HCT116 (cell line): ENCODE measurements at regions of chr12 and their contacts with region 1.

Region 1: GRCh38 chr12:40152783-40153383 is 47.0 kb upstream of the SLC2A13 start:
- DNase-seq: peak; percentile 24
- ATAC-seq: peak; percentile 53; the same call in 1 of the 2 replicates
- H3K4me3 ChIP-seq: no peak overlapping the region
- H3K27ac ChIP-seq: no peak overlapping the region
- H3K4me1 ChIP-seq: no peaks in the 10 kb centered on the region
- H3K27me3 ChIP-seq: no peaks in the 10 kb centered on the region
- CTCF ChIP-seq: peak; percentile 44 to 85 (median 68); a peak in 5 of 6 replicates
- POLR2A ChIP-seq: no peak
- RAD21 ChIP-seq: peak; percentile 60

Region 2: GRCh38 chr12:40271981-40272664 is 119.2 kb after region 1 on chr12:
- CTCF ChIA-PET with region 1: no interaction called
- POLR2A ChIA-PET with region 1: no interaction called
- RAD21 ChIA-PET with region 1: no interaction called
- intact Hi-C with region 1: no loop called
- DNase-seq: no peak
- ATAC-seq: no peak
- H3K4me3 ChIP-seq: no peak overlapping the region
- H3K27ac ChIP-seq: no peak overlapping the region
- H3K4me1 ChIP-seq: no peaks in the 10 kb centered on the region
- H3K27me3 ChIP-seq: no peaks in the 10 kb centered on the region
- CTCF ChIP-seq: no peak
- POLR2A ChIP-seq: no peak
- RAD21 ChIP-seq: no peak

Region 3: GRCh38 chr12:40312982-40313576 is 160.2 kb after region 1 on chr12:
- CTCF ChIA-PET with region 1: interaction called, 9 read pairs
- POLR2A ChIA-PET with region 1: no interaction called
- RAD21 ChIA-PET with region 1: no interaction called
- intact Hi-C with region 1: loop called (anchors 1 kb)
- DNase-seq: no peak
- ATAC-seq: no peak
- H3K4me3 ChIP-seq: no peak overlapping the region
- H3K27ac ChIP-seq: no peak overlapping the region
- H3K4me1 ChIP-seq: no peaks in the 10 kb centered on the region
- H3K27me3 ChIP-seq: no peaks in the 10 kb centered on the region
- CTCF ChIP-seq: peak; percentile 34 to 64 (median 50); a peak in 5 of 6 replicates
- POLR2A ChIP-seq: no peak
- RAD21 ChIP-seq: peak; percentile 64

Region 4: DNA sequence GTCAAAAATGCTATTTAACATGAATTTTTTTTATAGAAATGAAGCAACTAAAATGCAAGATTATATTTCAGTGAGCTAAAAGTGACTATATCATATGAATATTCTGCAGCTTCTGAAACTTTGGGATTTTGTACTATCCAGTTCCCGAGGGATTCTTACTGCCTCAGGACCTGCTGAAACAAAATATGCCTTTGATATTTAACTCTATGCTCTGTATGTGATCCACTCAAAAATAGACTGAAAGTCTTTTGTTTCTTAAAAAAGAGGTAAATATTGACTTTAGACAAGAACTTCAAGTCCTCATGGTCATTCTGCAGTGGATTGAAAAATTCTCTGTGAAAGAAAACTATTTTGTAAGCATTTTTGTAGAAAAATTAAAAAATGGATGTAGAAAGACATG is 561.8 kb after region 1 on chr12:
- CTCF ChIA-PET with region 1: no interaction called
- POLR2A ChIA-PET with region 1: no interaction called
- RAD21 ChIA-PET with region 1: no interaction called
- intact Hi-C with region 1: no loop called
- DNase-seq: no peak
- ATAC-seq: no peak
- H3K4me3 ChIP-seq: no peak overlapping the region
- H3K27ac ChIP-seq: no peak overlapping the region
- H3K4me1 ChIP-seq: no peaks in the 10 kb centered on the region
- H3K27me3 ChIP-seq: no peaks in the 10 kb centered on the region
- CTCF ChIP-seq: no peak
- POLR2A ChIP-seq: no peak
- RAD21 ChIP-seq: no peak